ENCODE measurements at regions of chr5 and their contacts with region 1.

Region 1: GRCh38 chr5:139765409-139766217 is 30.0 kb upstream of the PSD2 start:
- DNase-seq: peak; percentile 75 to 88 (median 83)
- H3K4me3 ChIP-seq: peak overlapping the region; percentile 61
- H3K27ac ChIP-seq: no peak overlapping the region
- H3K4me1 ChIP-seq: no peaks in the 10 kb centered on the region
- H3K27me3 ChIP-seq: no peaks in the 10 kb centered on the region
- CTCF ChIP-seq: peak in 2 of 3 donors; percentile 100
- EP300 ChIP-seq: no peak
- POLR2A ChIP-seq: no peak

Region 2: DNA sequence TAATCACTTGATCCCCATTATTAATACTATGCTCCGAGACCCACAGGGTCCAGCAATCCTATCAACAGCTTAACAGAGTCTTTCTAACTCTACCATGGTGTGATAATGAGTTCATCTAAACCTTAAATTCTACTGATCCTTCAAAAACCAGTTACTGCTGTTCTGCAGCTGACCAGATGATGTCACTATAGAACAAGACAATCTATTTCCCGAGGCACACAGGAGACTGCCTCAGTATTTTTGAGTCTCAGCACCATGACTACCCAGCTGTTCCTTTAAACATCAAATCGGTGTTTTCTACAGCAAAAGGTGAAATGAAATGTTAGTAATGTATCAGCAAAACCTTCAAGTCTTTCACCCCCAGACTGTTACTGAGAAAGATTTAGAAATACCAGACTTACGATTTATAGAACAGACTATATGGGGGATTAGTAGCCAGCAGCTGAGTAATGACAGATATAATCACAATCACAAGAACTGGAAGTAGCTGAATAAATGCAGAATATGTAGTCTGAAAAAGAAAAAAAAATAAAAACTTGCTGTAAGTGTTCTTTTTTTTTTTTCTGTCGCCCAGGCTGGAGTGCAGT is 343.2 kb before region 1 on chr5:
- intact Hi-C with region 1: loop called in 2 of 4 experiments (anchors 2 to 10 kb)
- DNase-seq: peak in 1 of 5 donors; percentile 48
- H3K4me3 ChIP-seq: no peak overlapping the region
- H3K27ac ChIP-seq: no peak overlapping the region
- H3K4me1 ChIP-seq: peaks cover 1% of the 10 kb centered on the region
- H3K27me3 ChIP-seq: no peaks in the 10 kb centered on the region
- CTCF ChIP-seq: peak; percentile 55 to 66 (median 58)
- EP300 ChIP-seq: no peak
- POLR2A ChIP-seq: no peak

Region 3: DNA sequence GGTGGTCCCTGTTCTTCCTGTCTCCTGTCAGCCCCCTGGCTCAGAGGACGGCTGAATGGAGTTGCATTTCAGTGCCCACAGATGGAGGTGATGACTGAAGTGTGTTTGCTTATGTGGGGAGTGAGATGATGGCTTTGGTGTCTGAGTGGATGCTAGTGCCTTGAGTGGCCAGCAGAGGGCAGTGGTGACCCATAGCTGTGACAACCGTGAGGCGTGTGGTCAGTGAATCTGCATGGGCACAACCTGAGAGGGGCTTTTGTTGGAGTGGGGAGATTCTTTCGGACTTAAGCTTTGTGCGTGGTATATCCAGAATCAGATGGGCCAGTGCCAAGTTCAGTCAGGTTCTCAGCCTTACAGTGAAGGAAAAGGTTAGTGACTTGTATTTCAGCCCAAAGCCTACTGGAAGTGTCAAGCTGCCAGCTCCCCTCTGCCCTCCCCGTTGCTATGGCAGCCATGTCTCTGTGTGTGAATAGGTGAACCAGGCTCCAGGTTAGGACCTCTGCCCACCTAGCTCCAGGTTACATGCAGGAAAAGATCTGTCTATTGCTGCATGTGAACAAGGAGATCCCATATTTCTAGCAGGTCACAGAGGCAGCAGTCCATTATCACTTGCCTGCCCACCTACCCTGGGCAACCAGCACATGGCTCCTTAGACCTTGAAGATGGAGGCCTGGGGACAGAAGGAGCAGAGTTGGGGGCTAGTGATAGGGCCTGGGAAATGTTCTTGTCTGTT is 132.2 kb before region 1 on chr5:
- intact Hi-C with region 1: loop called (anchors 2 kb)
- DNase-seq: peak; percentile 44 to 80 (median 73)
- H3K4me3 ChIP-seq: no peak overlapping the region
- H3K27ac ChIP-seq: no peak overlapping the region
- H3K4me1 ChIP-seq: peaks cover 8% of the 10 kb centered on the region
- H3K27me3 ChIP-seq: no peaks in the 10 kb centered on the region
- CTCF ChIP-seq: peak; percentile 78 to 95 (median 88)
- EP300 ChIP-seq: no peak
- POLR2A ChIP-seq: no peak

Region 4: GRCh38 chr5:139696894-139697658 is 68.5 kb before region 1 on chr5:
- intact Hi-C with region 1: loop called in 1 of 4 experiments (anchors 10 kb)
- DNase-seq: peak; percentile 79 to 89 (median 86)
- H3K4me3 ChIP-seq: peak overlapping the region; percentile 31
- H3K27ac ChIP-seq: peak overlapping the region; percentile 46 to 61
- H3K4me1 ChIP-seq: peaks cover 16% of the 10 kb centered on the region
- H3K27me3 ChIP-seq: no peaks in the 10 kb centered on the region
- CTCF ChIP-seq: no peak
- EP300 ChIP-seq: no peak
- POLR2A ChIP-seq: no peak

Region 5: DNA sequence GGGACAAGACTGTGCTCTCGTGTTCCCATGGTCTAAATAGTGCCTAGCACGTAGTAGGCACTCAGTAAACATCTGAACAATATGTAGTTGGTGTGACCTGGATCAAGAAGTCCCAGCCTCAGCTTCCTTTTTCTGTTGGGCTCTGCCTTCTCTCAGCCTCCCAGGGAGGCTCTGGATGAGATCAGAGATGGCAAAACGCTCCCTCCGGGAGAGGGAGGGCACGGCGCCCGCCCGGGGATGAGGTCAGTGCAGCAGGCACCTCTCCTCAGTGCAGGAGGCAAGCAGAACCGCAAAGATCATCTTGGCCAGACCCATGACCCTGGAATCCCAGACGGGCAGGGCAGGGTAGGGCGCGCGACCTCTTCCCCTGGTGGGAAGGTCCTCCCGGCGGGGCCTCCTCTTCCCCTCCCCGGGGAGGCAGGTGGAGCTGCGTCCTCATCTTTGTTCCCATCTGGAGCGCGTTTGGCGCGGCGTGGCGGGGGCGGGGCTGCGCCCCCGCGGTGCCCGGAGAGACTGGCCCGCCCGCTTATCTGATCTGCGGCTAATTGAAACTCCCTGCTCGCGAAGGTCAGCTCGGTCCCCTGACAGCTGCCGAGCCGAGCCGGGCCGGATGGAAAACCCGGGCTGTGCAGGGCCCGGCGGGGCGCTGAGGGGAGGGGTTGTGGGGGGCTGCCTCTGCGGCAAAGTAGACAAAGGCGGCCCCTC is 56.6 kb before region 1 on chr5:
- intact Hi-C with region 1: loop called in 1 of 4 experiments (anchors 5 kb)
- DNase-seq: peak in 1 of 5 donors; percentile 50
- H3K4me3 ChIP-seq: no peak overlapping the region
- H3K27ac ChIP-seq: no peak overlapping the region
- H3K4me1 ChIP-seq: peaks cover 15% of the 10 kb centered on the region
- H3K27me3 ChIP-seq: no peaks in the 10 kb centered on the region
- CTCF ChIP-seq: no peak
- EP300 ChIP-seq: no peak
- POLR2A ChIP-seq: no peak